Aorta (tissue), 5 donors: ENCODE measurements at regions of chr10 and their contacts with region 1.

Region 1: DNA sequence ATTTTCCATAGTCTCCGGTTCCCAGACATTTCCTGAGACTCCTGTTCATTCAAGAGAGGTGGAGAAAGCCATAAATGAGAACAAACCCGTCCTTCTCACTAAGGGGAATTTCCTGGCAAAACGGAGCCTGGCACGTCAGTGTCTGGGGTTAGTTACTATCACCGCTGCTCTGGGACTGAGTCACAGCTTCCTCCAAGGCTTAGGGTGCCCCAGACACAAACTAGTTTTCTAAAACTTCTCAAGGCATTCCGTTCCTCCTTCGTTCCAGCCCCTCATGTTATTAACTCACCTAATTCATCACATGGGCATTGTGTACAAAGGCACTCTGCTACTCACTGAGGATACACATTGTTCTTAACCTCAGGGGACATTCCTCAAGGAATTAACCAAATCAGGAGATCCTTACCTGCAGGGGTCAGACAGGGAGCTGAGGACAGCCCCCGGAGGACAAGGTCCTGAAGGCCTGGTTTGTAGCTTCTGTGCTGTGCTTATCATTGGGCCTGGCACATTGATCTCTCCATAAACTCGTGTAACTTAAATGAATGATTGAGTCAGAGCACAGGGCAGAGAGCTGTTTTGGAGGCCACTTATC is 103.0 kb upstream of the KLF6 start:
- DNase-seq: peak; percentile 87 to 90
- ATAC-seq: peak; percentile 52
- H3K4me3 ChIP-seq: no peak overlapping the region
- H3K27ac ChIP-seq: peak overlapping the region; percentile 92 to 100
- H3K4me1 ChIP-seq: peaks cover 3 to 5% of the 10 kb centered on the region in 2 donors
- H3K27me3 ChIP-seq: no peaks in the 10 kb centered on the region

Region 2: DNA sequence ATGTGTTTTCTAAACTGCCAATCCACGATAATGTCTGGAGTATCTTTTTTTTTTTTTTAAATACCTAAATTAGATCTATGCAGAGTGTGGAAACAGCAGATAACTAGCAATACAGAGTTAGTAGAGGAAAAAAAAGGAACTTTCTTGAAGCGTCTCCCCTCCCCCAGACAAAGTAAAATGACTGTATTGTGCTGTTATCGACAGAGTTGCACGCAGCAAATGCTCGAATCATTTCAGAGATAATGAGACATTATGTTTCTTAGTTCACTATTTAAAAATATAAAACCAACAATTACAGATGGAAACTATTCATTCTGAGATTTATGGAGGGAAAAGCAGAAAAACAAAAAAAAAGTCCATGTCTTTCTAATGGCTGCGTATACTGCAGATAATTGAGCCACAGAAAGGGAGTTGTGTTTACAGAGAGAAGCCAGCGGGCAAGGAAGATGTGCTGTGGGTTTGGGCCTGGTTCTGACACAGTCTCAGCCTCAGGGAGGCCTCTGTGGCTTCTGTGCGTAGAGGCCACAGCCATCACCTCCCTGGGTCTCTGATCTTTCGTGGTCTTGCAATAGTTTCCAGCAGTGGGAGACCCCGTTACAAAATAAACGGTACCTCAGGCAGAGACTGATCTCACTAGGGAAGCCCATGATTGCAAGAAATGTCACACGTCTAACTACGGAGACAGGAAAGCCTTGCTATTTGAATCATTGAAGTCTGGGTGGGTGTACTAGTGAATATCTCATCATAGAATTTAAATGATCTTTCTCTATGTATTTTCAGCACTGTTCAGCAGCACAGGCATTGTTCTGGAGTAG is 83.8 kb before region 1 on chr10:
- intact Hi-C with region 1: loop called in 1 of 2 experiments (anchors 5 kb)
- DNase-seq: no peak
- ATAC-seq: no peak
- H3K4me3 ChIP-seq: no peak overlapping the region
- H3K27ac ChIP-seq: no peak overlapping the region
- H3K4me1 ChIP-seq: peaks cover 2 to 4% of the 10 kb centered on the region in 2 donors
- H3K27me3 ChIP-seq: no peaks in the 10 kb centered on the region

Region 3: DNA sequence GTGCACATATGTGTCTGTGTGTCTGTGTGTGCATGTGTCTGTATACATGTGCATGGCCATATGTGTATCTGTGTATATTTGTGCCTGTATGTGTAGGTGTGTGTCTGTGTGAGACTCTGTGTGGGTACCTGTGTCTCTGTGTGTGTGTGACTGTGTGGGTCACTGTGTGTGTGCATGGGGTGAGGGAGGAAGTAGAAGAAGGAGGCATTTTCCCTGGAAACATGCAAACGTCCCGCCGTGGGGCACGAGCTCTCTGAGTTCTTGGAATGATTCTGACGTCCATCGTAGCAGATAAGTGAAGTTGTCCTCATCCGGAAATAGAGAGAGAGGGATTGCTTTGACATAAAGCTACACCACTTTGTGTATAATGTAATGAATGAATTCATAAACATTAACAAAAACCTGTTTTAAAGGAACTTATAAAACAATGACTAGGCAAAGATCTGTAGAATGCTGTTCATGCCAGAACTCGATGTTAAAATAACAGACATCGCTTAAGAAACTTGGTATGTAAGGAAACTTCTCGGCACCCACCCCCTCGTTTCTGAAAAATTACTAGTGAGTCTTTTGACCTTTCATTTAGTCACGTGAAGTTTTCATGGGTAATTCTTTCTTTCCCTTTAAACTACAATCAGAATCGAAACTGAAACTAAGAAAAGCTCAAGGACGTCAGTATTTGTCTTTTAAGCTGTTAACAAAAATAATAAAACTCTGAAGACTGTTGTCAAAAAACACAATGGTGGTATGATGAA is 59.4 kb before region 1 on chr10:
- intact Hi-C with region 1: no loop called
- DNase-seq: peak in 1 of 2 donors; percentile 60
- ATAC-seq: peak; percentile 61
- H3K4me3 ChIP-seq: peak overlapping the region; percentile 21 to 63
- H3K27ac ChIP-seq: peak overlapping the region in 1 of 2 donors; percentile 89
- H3K4me1 ChIP-seq: peaks cover 2 to 7% of the 10 kb centered on the region in 2 donors
- H3K27me3 ChIP-seq: no peaks in the 10 kb centered on the region

Region 4: DNA sequence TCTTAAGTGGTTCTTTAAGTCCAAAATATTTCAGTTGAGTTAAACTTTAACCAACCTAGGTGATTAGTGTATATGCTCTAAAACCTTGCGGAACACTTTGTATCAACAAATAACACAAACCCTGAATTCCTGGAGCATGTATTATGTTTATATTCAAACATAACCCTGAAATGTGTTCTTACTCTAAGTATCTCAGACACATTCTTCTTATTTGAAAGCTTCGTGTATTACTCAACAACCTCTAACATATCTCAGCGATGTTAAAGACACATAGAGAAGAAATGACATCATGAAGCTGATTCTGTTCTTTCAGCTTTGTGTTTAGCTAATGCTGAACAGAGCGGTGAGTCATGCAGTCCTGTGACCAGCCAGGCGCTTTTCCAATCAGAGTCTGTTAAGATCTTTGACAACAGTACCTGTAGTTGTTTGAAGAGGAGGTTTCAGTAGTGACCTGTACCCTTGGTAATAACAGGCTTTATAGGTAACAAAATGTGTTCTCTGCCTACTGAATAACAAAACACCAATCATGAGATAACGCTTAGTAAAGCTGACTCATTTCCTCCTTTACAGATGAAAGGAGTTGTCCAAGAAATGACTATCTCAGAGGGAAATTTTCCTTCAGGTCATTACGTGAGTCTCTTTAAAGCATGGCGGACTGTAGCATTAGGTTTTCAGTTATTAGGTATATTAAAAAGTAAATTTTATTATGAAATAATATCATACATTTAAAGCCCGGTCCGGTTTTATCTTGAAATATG is 35.7 kb before region 1 on chr10:
- intact Hi-C with region 1: loop called (anchors 2 to 5 kb)
- DNase-seq: peak; percentile 84 to 85
- ATAC-seq: peak; percentile 92
- H3K4me3 ChIP-seq: no peak overlapping the region
- H3K27ac ChIP-seq: peak overlapping the region; percentile 20 to 73
- H3K4me1 ChIP-seq: peaks cover 0 to 5% of the 10 kb centered on the region in 2 donors
- H3K27me3 ChIP-seq: no peaks in the 10 kb centered on the region

Region 5: GRCh38 chr10:3926675-3927404 is 38.9 kb after region 1 on chr10:
- intact Hi-C with region 1: loop called (anchors 5 kb)
- DNase-seq: no peak
- ATAC-seq: peak; percentile 21
- H3K4me3 ChIP-seq: no peak overlapping the region
- H3K27ac ChIP-seq: no peak overlapping the region
- H3K4me1 ChIP-seq: no peaks in the 10 kb centered on the region
- H3K27me3 ChIP-seq: no peaks in the 10 kb centered on the region